ENCODE measurements at regions of chr1 and their contacts with region 1.

Region 1: GRCh38 chr1:226121587-226122400 is 59.3 kb downstream of the H3-3A start:
- DNase-seq: peak; percentile 67 to 88
- ATAC-seq: peak; percentile 72 to 77
- H3K4me3 ChIP-seq: peak overlapping the region; percentile 62
- H3K27ac ChIP-seq: peak overlapping the region; percentile 90 to 98
- H3K4me1 ChIP-seq: peaks cover 31% of the 10 kb centered on the region
- CTCF ChIP-seq: peak; percentile 99
- EP300 ChIP-seq: no peak
- POLR2A ChIP-seq: peak; percentile 45
- RAD21 ChIP-seq: peak; percentile 41 to 85; a peak in 4 of 5 replicates

Region 2: GRCh38 chr1:225845571-225846259 is 276.1 kb before region 1 on chr1:
- CTCF ChIA-PET with region 1: no interaction called
- POLR2A ChIA-PET with region 1: no interaction called
- DNase-seq: peak; percentile 72 to 88
- ATAC-seq: peak; percentile 80 to 88
- H3K4me3 ChIP-seq: no peak overlapping the region
- H3K27ac ChIP-seq: peak overlapping the region in 1 of 2 experiments; percentile 60; a peak in 3 of 6 replicates
- H3K4me1 ChIP-seq: peaks cover 6% of the 10 kb centered on the region; the same call in 1 of the 3 replicates
- CTCF ChIP-seq: peak; percentile 66
- EP300 ChIP-seq: no peak
- POLR2A ChIP-seq: no peak
- RAD21 ChIP-seq: peak; percentile 85 to 93

Region 3: GRCh38 chr1:225973158-225973557 is 148.6 kb before region 1 on chr1:
- CTCF ChIA-PET with region 1: no interaction called
- POLR2A ChIA-PET with region 1: no interaction called
- DNase-seq: no peak
- ATAC-seq: no peak
- H3K4me3 ChIP-seq: no peak overlapping the region
- H3K27ac ChIP-seq: no peak overlapping the region
- H3K4me1 ChIP-seq: no peaks in the 10 kb centered on the region
- CTCF ChIP-seq: no peak
- EP300 ChIP-seq: no peak
- POLR2A ChIP-seq: no peak
- RAD21 ChIP-seq: no peak

Region 4: GRCh38 chr1:226083302-226084101 is 38.3 kb before region 1 on chr1:
- CTCF ChIA-PET with region 1: interaction called, 24 read pairs
- POLR2A ChIA-PET with region 1: interaction called, 3 read pairs
- DNase-seq: peak; percentile 87 to 96
- ATAC-seq: peak; percentile 84 to 92
- H3K4me3 ChIP-seq: peak overlapping the region; percentile 68
- H3K27ac ChIP-seq: peak overlapping the region; percentile 85 to 94
- H3K4me1 ChIP-seq: peaks cover 4% of the 10 kb centered on the region; the same call in 2 of the 3 replicates
- CTCF ChIP-seq: no peak
- EP300 ChIP-seq: no peak; a peak in 1 of 5 replicates
- POLR2A ChIP-seq: peak; percentile 59; the same call in 1 of the 2 replicates
- RAD21 ChIP-seq: no peak

Region 5: GRCh38 chr1:226109829-226110248 is 12.0 kb before region 1 on chr1:
- CTCF ChIA-PET with region 1: interaction called, 73 read pairs
- POLR2A ChIA-PET with region 1: no interaction called
- DNase-seq: peak; percentile 86 to 96
- ATAC-seq: peak; percentile 87 to 90
- H3K4me3 ChIP-seq: peak overlapping the region; percentile 96
- H3K27ac ChIP-seq: peak overlapping the region; percentile 95 to 97
- H3K4me1 ChIP-seq: peaks cover 9% of the 10 kb centered on the region
- CTCF ChIP-seq: no peak
- EP300 ChIP-seq: no peak
- POLR2A ChIP-seq: peak; percentile 60
- RAD21 ChIP-seq: no peak

Region 6: DNA sequence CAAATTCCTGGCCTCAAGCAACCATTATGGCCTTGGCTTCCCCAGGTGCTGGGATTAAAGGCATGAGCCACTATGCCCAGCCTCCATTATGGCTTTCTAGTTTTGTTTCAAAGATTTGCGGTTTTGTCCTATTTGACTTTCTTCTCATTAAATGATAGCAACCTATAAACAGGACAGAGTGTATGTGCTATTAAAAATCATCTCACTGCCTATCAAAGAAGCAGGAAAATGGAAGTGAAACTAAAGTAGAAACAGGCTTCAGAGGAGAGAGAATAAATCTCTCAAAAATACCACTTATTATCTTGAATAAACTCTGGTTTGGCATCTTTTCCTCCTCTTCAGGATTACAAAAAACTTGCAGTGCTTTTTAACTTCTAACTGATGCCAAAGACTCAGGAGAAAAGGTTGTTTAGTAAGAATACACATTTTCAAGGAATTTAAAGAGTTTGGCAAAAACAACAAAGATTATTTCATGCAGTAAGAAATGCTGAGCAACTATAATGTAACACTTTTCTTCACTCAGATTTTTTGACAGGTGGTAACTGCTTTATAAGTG is 36.0 kb after region 1 on chr1:
- CTCF ChIA-PET with region 1: interaction called, 35 read pairs
- POLR2A ChIA-PET with region 1: no interaction called
- DNase-seq: no peak
- ATAC-seq: no peak
- H3K4me3 ChIP-seq: no peak overlapping the region
- H3K27ac ChIP-seq: no peak overlapping the region
- H3K4me1 ChIP-seq: no peaks in the 10 kb centered on the region
- CTCF ChIP-seq: no peak
- EP300 ChIP-seq: no peak
- POLR2A ChIP-seq: no peak
- RAD21 ChIP-seq: no peak

Region 7: GRCh38 chr1:226201029-226201593 is 79.3 kb after region 1 on chr1:
- CTCF ChIA-PET with region 1: interaction called, 219 read pairs
- POLR2A ChIA-PET with region 1: interaction called, 5 read pairs
- DNase-seq: peak in 1 of 2 experiments; percentile 21
- ATAC-seq: peak in 1 of 2 experiments; percentile 41; a peak in 4 of 6 replicates
- H3K4me3 ChIP-seq: no peak overlapping the region
- H3K27ac ChIP-seq: no peak overlapping the region
- H3K4me1 ChIP-seq: no peaks in the 10 kb centered on the region
- CTCF ChIP-seq: no peak
- EP300 ChIP-seq: no peak
- POLR2A ChIP-seq: no peak
- RAD21 ChIP-seq: peak in 1 of 2 experiments; percentile 42; a peak in 1 of 5 replicates

Region 8: DNA sequence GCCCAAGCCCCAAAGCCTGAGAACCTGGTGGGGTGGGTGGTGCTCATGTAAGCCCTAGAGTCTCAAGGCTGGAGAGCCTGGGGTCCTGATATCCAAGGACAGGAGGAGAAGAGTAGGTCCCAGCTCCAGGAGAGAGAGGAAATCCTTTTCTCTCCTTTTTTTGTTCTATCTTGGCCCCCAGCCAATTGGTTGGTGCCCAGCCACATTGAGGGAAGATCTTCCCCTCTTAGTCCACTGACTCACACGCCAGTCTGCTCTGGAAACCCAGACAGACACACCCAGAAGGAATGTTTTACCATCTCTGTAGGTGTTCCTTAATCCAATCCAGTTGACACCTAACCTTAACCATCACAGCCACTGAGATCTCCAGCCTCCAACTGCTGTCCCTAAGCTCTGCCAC is 203.4 kb after region 1 on chr1:
- CTCF ChIA-PET with region 1: interaction called, 19 read pairs
- POLR2A ChIA-PET with region 1: no interaction called
- DNase-seq: peak in 1 of 2 experiments; percentile 48
- ATAC-seq: peak; percentile 76 to 78; a peak in 5 of 6 replicates
- H3K4me3 ChIP-seq: no peak overlapping the region
- H3K27ac ChIP-seq: peak overlapping the region in 1 of 2 experiments; percentile 45; a peak in 1 of 6 replicates
- H3K4me1 ChIP-seq: peaks cover 11% of the 10 kb centered on the region
- CTCF ChIP-seq: no peak
- EP300 ChIP-seq: no peak
- POLR2A ChIP-seq: no peak
- RAD21 ChIP-seq: no peak

Measured in A549 (cell line).